PC-9 (cell line): ENCODE measurements at regions of chr17 and their contacts with region 1.

Region 1: DNA sequence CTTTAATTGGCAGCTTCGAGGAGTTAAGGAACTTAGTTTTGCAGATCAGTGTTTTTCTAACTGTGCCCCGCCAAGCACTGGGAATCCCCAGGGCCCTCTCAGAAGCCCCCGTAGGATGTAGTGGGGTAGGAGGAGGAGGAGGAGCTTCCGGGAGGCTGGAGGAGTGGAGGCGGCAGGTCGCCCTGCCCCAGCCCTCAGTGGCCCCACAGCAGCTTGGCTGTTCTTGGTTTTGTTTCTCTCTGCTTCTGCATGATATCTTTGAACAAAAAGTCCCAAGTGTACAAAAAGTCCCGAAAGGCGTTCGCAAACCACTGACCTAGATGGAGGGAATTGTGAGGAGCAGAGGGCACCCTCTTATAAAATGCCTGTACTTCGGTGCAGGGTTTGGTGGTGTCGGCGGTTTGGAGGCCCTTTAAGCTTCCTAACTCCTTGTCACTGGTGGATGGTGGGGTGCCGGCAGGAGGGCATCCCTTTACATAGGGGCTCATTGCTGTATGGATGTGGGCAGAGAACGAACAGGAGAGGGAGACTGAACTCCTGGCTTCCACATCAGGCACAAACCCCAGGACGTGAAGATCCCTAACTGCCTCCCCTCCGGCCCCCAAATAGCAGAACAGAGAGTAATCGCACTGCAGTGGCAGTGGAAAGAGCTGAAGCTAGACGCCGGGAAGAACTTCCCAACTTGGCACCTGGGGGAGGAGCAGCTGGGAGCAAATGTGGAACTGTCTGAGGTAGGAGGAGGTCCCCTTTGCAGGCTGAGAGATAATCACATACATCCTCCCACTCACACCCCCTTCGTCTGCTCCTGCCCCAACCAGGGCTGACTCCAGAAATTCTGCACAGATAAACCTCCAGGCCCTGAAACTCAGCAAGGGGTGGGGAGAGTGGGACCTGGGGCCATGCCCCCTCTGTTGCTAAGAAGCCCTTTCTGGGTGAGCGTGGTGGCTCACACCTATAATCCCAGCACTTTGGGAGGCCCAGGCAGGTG is 20.1 kb downstream of the EPOP start:
- DNase-seq: no peak
- H3K4me3 ChIP-seq: no peak overlapping the region
- H3K27ac ChIP-seq: no peak overlapping the region
- H3K4me1 ChIP-seq: no peaks in the 10 kb centered on the region
- H3K27me3 ChIP-seq: no peaks in the 10 kb centered on the region
- CTCF ChIP-seq: no peak

Region 2: DNA sequence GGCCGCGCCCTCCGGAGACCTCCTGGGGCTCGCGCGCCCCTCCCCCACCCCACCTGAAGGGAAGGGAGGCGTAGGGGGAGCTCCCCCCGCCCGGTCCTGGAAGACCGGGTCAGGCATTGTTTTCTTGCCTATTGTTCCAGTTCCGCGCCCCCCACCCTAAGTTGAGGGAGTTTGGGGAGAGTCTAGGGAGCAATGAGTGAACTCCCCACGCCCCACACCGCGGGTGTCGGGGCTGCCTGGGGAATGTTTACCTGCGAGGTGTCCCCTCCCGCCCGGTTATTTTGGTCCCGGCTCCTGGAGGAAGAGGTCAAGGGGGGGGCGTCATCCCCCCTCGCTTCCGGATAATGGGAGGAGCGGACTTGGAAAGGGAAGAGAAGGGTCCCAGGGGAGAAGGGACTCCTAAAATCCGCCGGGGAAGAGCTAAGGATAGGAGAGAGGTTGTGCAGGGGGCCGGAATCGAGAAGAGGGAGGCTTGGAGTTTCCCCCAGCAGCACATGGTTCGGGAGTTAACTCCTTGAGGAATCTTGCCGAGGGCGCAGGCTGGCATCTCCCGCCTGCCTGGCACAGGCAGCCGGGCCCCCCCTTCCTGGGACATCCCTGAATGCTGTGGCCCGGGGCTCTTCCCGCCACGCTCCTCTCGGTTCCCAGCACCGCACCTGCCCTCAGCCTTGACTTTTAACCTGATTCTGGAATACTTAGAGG is 51.2 kb after region 1 on chr17:
- CTCF ChIA-PET with region 1: no interaction called
- POLR2A ChIA-PET with region 1: no interaction called
- intact Hi-C with region 1: no loop called
- DNase-seq: peak in 1 of 2 experiments; percentile 31
- H3K4me3 ChIP-seq: peak overlapping the region; percentile 97
- H3K27ac ChIP-seq: no peak overlapping the region
- H3K4me1 ChIP-seq: peaks cover 14% of the 10 kb centered on the region
- H3K27me3 ChIP-seq: no peaks in the 10 kb centered on the region
- CTCF ChIP-seq: no peak

Region 3: DNA sequence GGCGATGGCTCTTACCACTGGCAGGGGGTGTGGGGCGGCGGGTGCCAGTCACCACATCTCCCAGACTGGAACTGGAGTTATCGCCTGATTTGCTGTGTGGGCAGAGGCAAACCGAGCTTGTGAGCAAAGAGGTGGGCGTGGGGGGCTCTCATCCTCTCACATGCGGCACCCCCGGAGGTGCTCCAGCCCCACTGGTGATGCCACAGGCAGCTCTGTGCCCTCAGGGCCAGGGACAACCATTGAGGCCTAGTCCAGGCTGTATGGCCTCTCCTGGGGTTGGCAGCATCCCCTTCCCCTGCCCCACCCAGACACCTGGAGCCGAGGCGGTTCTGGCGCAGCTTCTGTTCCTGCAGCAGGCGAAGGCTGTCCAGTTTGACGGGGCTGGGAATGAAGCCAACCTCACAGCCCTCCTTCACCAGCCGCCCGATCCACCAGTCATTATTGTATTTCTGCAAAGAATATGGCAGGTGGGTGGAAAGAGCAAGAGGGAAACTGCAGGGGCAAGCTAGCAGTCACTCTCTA is 531.8 kb after region 1 on chr17:
- CTCF ChIA-PET with region 1: interaction called, 30 read pairs
- POLR2A ChIA-PET with region 1: no interaction called
- intact Hi-C with region 1: no loop called
- DNase-seq: no peak
- H3K4me3 ChIP-seq: no peak overlapping the region
- H3K27ac ChIP-seq: no peak overlapping the region
- H3K4me1 ChIP-seq: no peaks in the 10 kb centered on the region
- H3K27me3 ChIP-seq: no peaks in the 10 kb centered on the region
- CTCF ChIP-seq: no peak